Heart left ventricle (tissue), 16 donors: ENCODE measurements at regions of chr17 and their contacts with region 1.

Region 1: DNA sequence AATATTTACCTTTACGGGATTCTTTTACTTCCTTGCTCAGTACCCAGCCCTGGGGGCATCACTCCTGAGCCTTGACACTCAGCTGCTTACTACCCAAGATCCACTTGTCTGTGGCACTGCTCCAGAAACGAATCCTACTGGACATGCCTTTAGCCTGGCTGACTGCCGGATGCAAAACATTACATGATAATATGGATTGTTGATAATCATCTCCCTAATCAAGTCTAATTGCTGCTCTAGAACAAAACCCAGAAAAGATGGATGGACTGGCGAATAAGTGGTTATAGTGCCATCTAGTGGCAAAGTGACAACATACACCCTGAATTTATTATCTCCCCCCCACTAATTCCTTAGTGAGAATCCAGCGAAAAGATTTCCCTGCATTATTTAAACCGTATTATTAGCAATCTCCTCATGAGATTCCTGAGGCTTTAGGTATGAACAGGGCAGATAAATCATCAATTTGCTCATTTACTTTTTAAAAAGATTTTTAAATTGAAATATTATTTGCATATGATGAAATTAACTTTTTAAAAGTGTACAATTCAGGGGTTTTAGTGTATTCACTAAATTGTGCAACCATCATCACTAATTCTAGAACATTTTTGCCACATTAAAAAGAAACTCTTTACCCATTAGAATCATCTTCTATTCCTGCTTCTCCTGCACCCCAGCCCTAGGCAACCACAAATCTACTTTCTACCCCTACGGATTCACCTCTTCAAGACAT is 61.6 kb downstream of the RGS9 start:
- DNase-seq: no peak
- ATAC-seq: peak in 3 of 4 donors; percentile 35 to 60 (median 41)
- H3K4me3 ChIP-seq: no peak overlapping the region
- H3K27ac ChIP-seq: no peak overlapping the region
- H3K4me1 ChIP-seq: no peaks in the 10 kb centered on the region
- H3K27me3 ChIP-seq: no peaks in the 10 kb centered on the region
- CTCF ChIP-seq: peak; percentile 70 to 88 (median 76)
- POLR2A ChIP-seq: no peak

Region 2: GRCh38 chr17:64920026-64920418 is 278.8 kb before region 1 on chr17:
- intact Hi-C with region 1: loop called in 2 of 10 experiments (anchors 5 kb)
- DNase-seq: peak in 2 of 5 donors; percentile 33 to 39
- ATAC-seq: peak in 3 of 4 donors; percentile 11 to 35 (median 23)
- H3K4me3 ChIP-seq: peak overlapping the region; percentile 60 to 88 (median 74)
- H3K27ac ChIP-seq: peak overlapping the region; percentile 80 to 97 (median 93)
- H3K4me1 ChIP-seq: peaks cover 0 to 16% (median 3%) of the 10 kb centered on the region in 12 donors
- H3K27me3 ChIP-seq: no peaks in the 10 kb centered on the region
- CTCF ChIP-seq: no peak
- POLR2A ChIP-seq: no peak

Region 3: GRCh38 chr17:64938925-64939474 is 259.8 kb before region 1 on chr17:
- intact Hi-C with region 1: loop called in 1 of 10 experiments (anchors 10 kb)
- DNase-seq: peak; percentile 43 to 76 (median 46)
- ATAC-seq: peak in 3 of 4 donors; percentile 64 to 72 (median 67)
- H3K4me3 ChIP-seq: peak overlapping the region in 1 of 12 donors; percentile 25
- H3K27ac ChIP-seq: no peak overlapping the region
- H3K4me1 ChIP-seq: peaks cover 0 to 3% (median 0%) of the 10 kb centered on the region in 12 donors
- H3K27me3 ChIP-seq: no peaks in the 10 kb centered on the region
- CTCF ChIP-seq: peak; percentile 28 to 57 (median 47)
- POLR2A ChIP-seq: no peak

Region 4: DNA sequence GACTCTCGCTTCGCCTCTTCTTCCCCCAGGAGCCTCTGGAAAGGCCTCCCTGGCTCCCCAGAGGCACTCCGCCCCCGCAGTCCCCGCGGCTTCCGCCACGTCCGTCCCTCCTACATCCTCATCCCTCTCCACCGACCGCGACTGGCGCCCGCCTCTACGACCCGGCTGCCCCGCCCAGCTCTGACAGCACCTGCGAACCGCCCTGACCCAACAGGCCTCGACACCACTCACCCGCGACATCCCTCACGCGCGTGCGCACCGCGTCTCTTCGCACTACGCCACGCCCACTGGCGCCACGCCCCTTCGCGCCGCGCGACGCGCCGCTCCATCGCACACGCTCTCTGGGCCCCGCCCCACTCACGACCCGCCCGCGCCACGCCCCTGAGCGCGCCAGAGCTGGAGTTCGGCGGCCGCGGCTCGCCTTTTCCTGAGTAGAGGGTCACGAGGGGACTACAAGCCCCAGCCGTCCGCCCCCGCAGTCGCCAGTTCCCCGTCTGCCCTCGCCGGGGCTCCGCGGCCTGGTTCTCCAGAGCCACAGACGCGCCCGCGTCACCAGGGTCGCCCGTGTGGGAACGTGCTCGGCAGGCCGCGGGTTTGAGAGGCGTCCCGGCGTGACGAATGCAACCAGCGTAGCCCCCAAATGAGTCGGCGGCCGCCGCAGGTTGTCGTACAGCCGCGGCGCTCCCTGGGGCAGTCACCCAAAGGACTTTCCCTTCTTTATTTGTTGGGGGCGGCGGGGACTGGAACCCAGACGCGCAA is 223.3 kb before region 1 on chr17:
- intact Hi-C with region 1: loop called in 1 of 10 experiments (anchors 10 kb)
- DNase-seq: peak; percentile 94 to 98 (median 96)
- ATAC-seq: peak; percentile 90 to 98 (median 96)
- H3K4me3 ChIP-seq: peak overlapping the region; percentile 59 to 98 (median 82)
- H3K27ac ChIP-seq: peak overlapping the region; percentile 94 to 100 (median 98)
- H3K4me1 ChIP-seq: peaks cover 0 to 26% (median 16%) of the 10 kb centered on the region in 12 donors
- H3K27me3 ChIP-seq: no peaks in the 10 kb centered on the region
- CTCF ChIP-seq: peak in 1 of 12 donors; percentile 4
- POLR2A ChIP-seq: peak; percentile 47 to 89